Right ventricle myocardium inferior (tissue), 1 donor: ENCODE measurements at regions of chr3 and their contacts with region 1.

Region 1: DNA sequence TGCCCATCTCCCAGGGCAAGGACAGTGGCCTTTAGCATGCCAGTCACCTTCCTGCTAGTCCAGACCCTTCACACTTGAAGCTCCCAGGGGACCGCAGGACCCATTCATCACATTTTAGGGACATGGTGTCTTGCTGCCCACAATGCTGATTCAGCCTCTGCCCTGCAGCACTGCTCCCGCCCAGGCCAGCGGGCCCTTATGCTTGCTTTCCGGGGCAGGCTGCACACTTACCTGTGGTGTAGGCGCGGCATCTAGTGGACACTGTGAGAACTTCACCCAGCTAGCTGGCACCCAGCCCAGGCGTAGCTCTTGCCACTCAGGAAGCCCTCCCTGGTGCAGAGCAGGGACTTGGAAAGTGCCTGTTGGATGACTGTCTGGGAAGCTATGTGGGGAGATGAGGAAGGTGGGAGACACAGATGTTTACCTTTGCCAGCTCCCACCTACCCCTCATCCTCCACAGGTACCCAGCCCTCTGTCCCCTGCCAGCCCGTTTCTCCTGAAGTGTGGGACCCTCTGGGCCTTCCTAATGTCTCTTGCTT is 26.2 kb upstream of the NR2C2 start:
- DNase-seq: peak; percentile 94
- ATAC-seq: peak; percentile 93

Region 2: DNA sequence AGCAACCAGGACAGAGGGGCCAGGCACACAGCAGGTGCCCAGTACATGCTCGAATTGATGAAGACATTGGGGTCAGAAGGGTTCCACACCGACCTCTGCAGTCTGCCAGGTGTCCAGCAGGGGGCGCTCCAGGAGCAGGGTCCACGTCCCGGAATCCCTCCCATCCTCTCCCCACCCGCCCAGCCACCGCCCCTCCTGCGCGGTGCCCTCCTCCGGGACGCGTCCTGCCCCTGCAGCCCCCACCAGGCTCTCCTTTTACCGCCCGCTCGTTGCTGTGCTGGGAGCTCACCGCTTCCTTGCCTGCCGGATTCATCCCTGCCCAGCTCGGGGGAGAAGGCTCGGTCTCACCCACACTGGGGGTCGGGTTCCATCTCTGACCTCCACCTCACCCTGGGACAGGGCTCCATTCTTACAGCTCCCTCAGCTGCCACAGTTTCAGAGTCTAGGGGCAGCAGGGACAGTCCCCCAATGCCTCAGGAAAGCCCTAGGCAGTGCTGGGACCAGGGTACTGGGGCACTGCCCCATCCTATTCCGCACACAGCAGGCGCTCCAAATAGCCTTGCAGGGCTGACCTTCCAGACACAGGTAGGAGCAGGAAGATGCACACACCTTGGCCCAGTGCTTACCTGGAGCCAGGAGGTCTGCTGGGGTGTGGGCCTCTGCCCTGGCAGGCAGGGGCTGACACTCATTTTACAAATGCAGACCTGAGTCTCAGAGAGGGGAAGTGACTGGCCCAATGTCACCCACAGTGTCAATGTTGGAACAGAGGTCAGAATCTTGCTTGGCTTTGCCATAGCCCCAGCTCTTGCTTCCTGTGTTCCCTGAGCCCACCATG is 412.0 kb before region 1 on chr3:
- intact Hi-C with region 1: loop called (anchors 5 kb)
- DNase-seq: peak; percentile 85
- ATAC-seq: peak; percentile 73

Region 3: GRCh38 chr3:14678015-14678503 is 243.1 kb before region 1 on chr3:
- intact Hi-C with region 1: loop called (anchors 1 kb)
- DNase-seq: no peak
- ATAC-seq: no peak

Region 4: GRCh38 chr3:14791343-14791945 is 129.7 kb before region 1 on chr3:
- intact Hi-C with region 1: loop called (anchors 1 kb)
- DNase-seq: peak; percentile 66
- ATAC-seq: peak; percentile 45

Region 5: GRCh38 chr3:15045667-15046066 is 124.5 kb after region 1 on chr3:
- intact Hi-C with region 1: loop called (anchors 5 kb)
- DNase-seq: no peak
- ATAC-seq: peak; percentile 58